ENCODE measurements at regions of chr11 and their contacts with region 1.

Region 1: DNA sequence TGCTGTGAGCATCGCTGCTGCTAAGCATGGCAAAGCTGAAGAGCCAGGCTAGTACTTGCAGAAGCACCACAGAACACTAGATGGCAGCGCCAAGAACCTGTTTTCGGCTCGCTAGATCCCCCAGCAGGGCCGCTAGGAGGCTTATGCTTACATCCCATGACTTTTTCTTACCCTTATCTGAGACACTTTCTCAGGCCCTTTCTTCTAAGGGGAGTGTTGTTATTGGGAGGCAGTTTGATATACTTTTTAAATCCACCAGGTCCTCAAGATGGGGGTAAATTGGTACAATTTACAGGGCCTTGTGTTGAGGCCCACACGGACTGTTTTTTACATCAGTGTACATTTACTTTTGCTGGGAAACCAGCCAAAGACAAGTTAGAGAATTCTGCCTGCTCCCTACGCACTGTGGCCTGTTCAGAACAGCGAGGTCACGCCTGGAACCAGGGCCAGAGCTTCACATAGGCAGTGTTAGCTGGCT is 4.0 kb downstream of the TRIM6 start:
- DNase-seq: peak in 4 of 5 donors; percentile 63 to 72 (median 67)
- ATAC-seq: peak in 3 of 4 donors; percentile 81 to 89 (median 84)
- H3K4me3 ChIP-seq: no peak overlapping the region
- H3K27ac ChIP-seq: peak overlapping the region in 7 of 12 donors; percentile 4 to 80 (median 20)
- H3K4me1 ChIP-seq: peaks cover 0 to 20% (median 6%) of the 10 kb centered on the region in 12 donors
- H3K27me3 ChIP-seq: no peaks in the 10 kb centered on the region
- CTCF ChIP-seq: peak; percentile 45 to 92 (median 60)
- POLR2A ChIP-seq: no peak

Region 2: GRCh38 chr11:5581014-5581413 is 19.4 kb before region 1 on chr11:
- intact Hi-C with region 1: no loop called
- DNase-seq: no peak
- ATAC-seq: no peak
- H3K4me3 ChIP-seq: no peak overlapping the region
- H3K27ac ChIP-seq: no peak overlapping the region
- H3K4me1 ChIP-seq: no peaks in the 10 kb centered on the region
- H3K27me3 ChIP-seq: no peaks in the 10 kb centered on the region
- CTCF ChIP-seq: no peak
- POLR2A ChIP-seq: no peak

Region 3: DNA sequence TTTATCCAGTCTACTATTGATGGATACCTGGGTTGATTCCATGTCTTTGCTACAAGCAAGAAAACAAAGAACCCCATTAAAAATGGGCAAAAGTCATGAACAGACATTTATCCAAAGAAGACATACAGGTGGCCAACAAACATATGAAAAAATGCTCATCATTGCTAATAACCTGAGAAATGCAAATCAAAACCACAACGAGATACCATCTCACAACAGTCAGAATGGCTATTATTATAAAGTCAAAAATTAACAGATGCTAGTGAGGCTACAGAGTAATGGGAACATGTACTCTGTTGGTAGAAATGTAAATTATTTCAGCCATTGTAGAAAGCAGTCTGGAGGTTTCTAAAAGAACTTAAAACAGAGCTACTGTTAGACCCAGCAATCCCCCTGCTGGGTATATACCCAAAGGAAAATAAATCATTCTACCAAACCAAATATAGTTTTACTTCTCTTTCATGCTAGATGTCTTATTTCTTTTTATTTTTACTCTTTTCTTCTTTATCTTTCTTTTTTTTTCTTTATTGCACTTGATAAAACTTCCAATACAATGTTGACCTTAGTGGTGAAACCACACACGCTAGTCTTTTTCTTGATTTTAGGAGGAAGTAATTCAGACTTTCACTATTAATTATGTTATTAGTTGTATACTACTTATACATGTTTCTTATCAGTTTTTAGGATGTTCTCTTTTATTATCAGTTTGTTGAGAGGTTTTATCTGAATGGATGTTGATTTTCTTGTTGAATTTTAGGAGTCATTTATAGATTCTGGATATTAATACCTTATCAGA is 103.5 kb after region 1 on chr11:
- intact Hi-C with region 1: loop called in 1 of 10 experiments (anchors 10 kb)
- DNase-seq: no peak
- ATAC-seq: no peak
- H3K4me3 ChIP-seq: no peak overlapping the region
- H3K27ac ChIP-seq: no peak overlapping the region
- H3K4me1 ChIP-seq: peaks cover 0 to 4% (median 0%) of the 10 kb centered on the region in 12 donors
- H3K27me3 ChIP-seq: no peaks in the 10 kb centered on the region
- CTCF ChIP-seq: no peak
- POLR2A ChIP-seq: no peak